ENCODE measurements at regions of chr12 and their contacts with region 1.

Region 1: GRCh38 chr12:7018350-7019042 is at the start of gene LPCAT3:
- DNase-seq: peak; percentile 94
- ATAC-seq: peak; percentile 96
- H3K4me3 Mint-ChIP-seq: peak within 1 kb of the TSS; percentile 87
- H3K27ac Mint-ChIP-seq: peak within 1 kb of the TSS; percentile 77
- H3K4me1 Mint-ChIP-seq: peaks cover 20% of the 10 kb centered on the region
- H3K27me3 Mint-ChIP-seq: no peaks in the 10 kb centered on the region
- CTCF ChIP-seq: no peak
- total RNA-seq, gene LPCAT3: 19.3 and 21.3 TPM in 2 replicates

Region 2: DNA sequence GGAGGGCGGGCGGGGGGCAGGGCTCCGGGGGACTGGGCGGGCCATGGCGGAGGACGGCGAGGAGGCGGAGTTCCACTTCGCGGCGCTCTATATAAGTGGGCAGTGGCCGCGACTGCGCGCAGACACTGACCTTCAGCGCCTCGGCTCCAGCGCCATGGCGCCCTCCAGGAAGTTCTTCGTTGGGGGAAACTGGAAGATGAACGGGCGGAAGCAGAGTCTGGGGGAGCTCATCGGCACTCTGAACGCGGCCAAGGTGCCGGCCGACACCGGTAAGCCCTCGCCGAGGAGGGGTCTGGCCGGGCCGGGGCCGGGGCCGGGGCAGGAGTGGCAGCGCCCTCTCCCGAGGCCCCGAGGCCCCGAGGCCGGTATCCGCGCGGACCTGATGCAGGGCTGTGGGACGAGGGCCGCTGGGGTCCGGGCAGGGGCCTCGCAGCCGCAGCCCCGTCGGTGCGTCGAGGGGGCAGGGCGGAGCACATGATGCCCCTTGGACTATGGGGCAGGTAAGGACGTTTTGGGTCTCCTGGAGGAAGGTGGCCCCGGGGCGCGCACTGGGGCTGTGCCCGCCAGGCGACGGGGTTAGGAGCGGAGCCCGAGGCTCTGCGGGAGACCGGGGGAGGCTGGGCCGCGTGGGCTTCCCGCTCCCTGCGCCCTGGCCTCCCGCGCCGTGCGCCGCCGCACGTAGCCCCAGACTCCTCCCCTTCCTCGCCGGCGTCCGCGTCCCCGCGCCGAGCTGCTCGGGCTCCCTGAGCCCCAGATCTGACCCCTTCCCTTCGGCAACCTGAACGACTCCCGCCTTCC is 150.9 kb before region 1 on chr12 and contains the start of gene TPI1:
- CTCF ChIA-PET with region 1: no interaction called
- POLR2A ChIA-PET with region 1: interaction called, 4 read pairs
- intact Hi-C with region 1: loop called (anchors 1 kb)
- DNase-seq: peak; percentile 65
- ATAC-seq: peak; percentile 78
- H3K4me3 Mint-ChIP-seq: peak within 1 kb of the TSS; percentile 89
- H3K27ac Mint-ChIP-seq: peak within 1 kb of the TSS; percentile 84
- H3K4me1 Mint-ChIP-seq: peaks cover 51% of the 10 kb centered on the region
- H3K27me3 Mint-ChIP-seq: no peaks in the 10 kb centered on the region
- CTCF ChIP-seq: no peak
- total RNA-seq, gene TPI1: 306 and 318 TPM in 2 replicates

Region 3: GRCh38 chr12:6921996-6922946 is 96.2 kb before region 1 on chr12:
- CTCF ChIA-PET with region 1: no interaction called
- POLR2A ChIA-PET with region 1: no interaction called
- intact Hi-C with region 1: loop called (anchors 1 kb)
- DNase-seq: no peak
- ATAC-seq: peak; percentile 49
- H3K4me3 Mint-ChIP-seq: peak overlapping the region; percentile 9
- H3K27ac Mint-ChIP-seq: peak overlapping the region; percentile 78
- H3K4me1 Mint-ChIP-seq: peaks cover 50% of the 10 kb centered on the region
- H3K27me3 Mint-ChIP-seq: no peaks in the 10 kb centered on the region
- CTCF ChIP-seq: no peak

Measured in activated B cell treated with CpG ODN at 0.5 μM for 24 hours (primary cell).